ENCODE measurements at regions of chr16 and their contacts with region 1.

Region 1: DNA sequence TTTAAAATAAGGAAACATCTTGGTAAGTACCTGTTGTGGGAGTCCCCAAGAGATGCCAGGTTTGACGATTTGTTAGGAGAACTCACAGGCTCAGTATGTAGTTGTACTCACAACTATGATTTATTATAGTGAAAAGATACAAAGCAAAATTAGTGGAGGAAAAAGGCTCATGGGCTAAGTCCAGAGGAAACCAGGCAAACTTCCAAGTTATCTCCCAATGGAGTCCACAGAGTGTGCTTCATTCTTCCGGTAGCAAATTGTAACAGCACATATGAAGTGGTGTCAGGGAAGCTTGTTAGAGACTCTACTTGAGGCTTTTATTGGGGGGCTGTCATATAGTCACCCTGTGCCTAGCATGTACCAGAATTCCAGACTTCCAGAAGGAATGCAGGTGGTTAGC is 2.3 kb downstream of the DDX19A start:
- DNase-seq: no peak
- H3K4me3 ChIP-seq: no peak overlapping the region
- CTCF ChIP-seq: no peak
- POLR2A ChIP-seq: no peak

Region 2: GRCh38 chr16:69520800-69521602 is 828.0 kb before region 1 on chr16:
- intact Hi-C with region 1: no loop called
- DNase-seq: peak in 1 of 2 donors; percentile 48
- H3K4me3 ChIP-seq: no peak overlapping the region
- CTCF ChIP-seq: no peak
- POLR2A ChIP-seq: no peak

Region 3: GRCh38 chr16:69698404-69698803 is 650.6 kb before region 1 on chr16:
- intact Hi-C with region 1: loop called (anchors 5 kb)
- DNase-seq: no peak
- H3K4me3 ChIP-seq: no peak overlapping the region
- CTCF ChIP-seq: no peak
- POLR2A ChIP-seq: no peak